WTC11 (cell line): ENCODE measurements at regions of chr2 and their contacts with region 1.

Region 1: GRCh38 chr2:44479122-44479887 is 117.6 kb downstream of the CAMKMT start:
- DNase-seq: no peak
- ATAC-seq: peak; percentile 95
- H3K4me3 Mint-ChIP-seq: no peak overlapping the region
- H3K27ac Mint-ChIP-seq: peak overlapping the region; percentile 38; the same call in 1 of the 2 replicates
- H3K4me1 Mint-ChIP-seq: peaks cover 35% of the 10 kb centered on the region
- H3K27me3 Mint-ChIP-seq: no peaks in the 10 kb centered on the region
- CTCF ChIP-seq: peak; percentile 81

Region 2: GRCh38 chr2:44462934-44463849 is 16.1 kb before region 1 on chr2:
- CTCF ChIA-PET with region 1: interaction called, 57 read pairs
- POLR2A ChIA-PET with region 1: interaction called, 3 read pairs
- DNase-seq: peak; percentile 34
- ATAC-seq: peak; percentile 98
- H3K4me3 Mint-ChIP-seq: peak overlapping the region; percentile 20
- H3K27ac Mint-ChIP-seq: peak overlapping the region; percentile 97
- H3K4me1 Mint-ChIP-seq: peaks cover 55% of the 10 kb centered on the region
- H3K27me3 Mint-ChIP-seq: no peaks in the 10 kb centered on the region
- CTCF ChIP-seq: no peak

Region 3: GRCh38 chr2:44515416-44515815 is 36.1 kb after region 1 on chr2:
- CTCF ChIA-PET with region 1: interaction called, 11 read pairs
- POLR2A ChIA-PET with region 1: no interaction called
- DNase-seq: no peak
- ATAC-seq: no peak
- H3K4me3 Mint-ChIP-seq: no peak overlapping the region
- H3K27ac Mint-ChIP-seq: no peak overlapping the region
- H3K4me1 Mint-ChIP-seq: peaks cover 25% of the 10 kb centered on the region
- H3K27me3 Mint-ChIP-seq: no peaks in the 10 kb centered on the region
- CTCF ChIP-seq: no peak

Region 4: GRCh38 chr2:44605511-44605910 is 126.2 kb after region 1 on chr2:
- CTCF ChIA-PET with region 1: no interaction called
- POLR2A ChIA-PET with region 1: no interaction called
- DNase-seq: no peak
- ATAC-seq: no peak
- H3K4me3 Mint-ChIP-seq: no peak overlapping the region
- H3K27ac Mint-ChIP-seq: no peak overlapping the region
- H3K4me1 Mint-ChIP-seq: no peaks in the 10 kb centered on the region
- H3K27me3 Mint-ChIP-seq: no peaks in the 10 kb centered on the region
- CTCF ChIP-seq: no peak

Region 5: DNA sequence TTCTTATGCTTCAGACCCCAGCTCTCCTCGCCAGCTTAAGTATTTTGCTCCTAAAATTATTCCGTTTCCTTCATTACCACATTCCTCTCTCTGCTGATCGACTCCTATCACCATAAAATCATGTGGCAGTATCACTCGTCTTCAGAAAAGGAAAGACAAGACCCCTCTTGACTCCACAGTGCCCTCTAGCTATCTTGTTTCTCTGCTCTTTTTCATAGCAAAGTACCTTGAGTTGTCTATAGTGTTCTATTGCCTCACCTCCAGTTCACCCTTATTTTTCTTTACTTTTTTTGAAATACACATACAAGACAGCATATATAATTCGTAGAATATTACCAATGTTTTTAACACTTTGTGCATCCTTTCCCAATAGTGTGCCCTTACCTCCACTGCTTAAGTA is 189.0 kb after region 1 on chr2:
- CTCF ChIA-PET with region 1: interaction called, 12 read pairs
- POLR2A ChIA-PET with region 1: no interaction called
- DNase-seq: no peak
- ATAC-seq: peak; percentile 92
- H3K4me3 Mint-ChIP-seq: no peak overlapping the region
- H3K27ac Mint-ChIP-seq: no peak overlapping the region
- H3K4me1 Mint-ChIP-seq: peaks cover 21% of the 10 kb centered on the region
- H3K27me3 Mint-ChIP-seq: no peaks in the 10 kb centered on the region; the same call in 1 of the 2 replicates
- CTCF ChIP-seq: no peak

Region 6: DNA sequence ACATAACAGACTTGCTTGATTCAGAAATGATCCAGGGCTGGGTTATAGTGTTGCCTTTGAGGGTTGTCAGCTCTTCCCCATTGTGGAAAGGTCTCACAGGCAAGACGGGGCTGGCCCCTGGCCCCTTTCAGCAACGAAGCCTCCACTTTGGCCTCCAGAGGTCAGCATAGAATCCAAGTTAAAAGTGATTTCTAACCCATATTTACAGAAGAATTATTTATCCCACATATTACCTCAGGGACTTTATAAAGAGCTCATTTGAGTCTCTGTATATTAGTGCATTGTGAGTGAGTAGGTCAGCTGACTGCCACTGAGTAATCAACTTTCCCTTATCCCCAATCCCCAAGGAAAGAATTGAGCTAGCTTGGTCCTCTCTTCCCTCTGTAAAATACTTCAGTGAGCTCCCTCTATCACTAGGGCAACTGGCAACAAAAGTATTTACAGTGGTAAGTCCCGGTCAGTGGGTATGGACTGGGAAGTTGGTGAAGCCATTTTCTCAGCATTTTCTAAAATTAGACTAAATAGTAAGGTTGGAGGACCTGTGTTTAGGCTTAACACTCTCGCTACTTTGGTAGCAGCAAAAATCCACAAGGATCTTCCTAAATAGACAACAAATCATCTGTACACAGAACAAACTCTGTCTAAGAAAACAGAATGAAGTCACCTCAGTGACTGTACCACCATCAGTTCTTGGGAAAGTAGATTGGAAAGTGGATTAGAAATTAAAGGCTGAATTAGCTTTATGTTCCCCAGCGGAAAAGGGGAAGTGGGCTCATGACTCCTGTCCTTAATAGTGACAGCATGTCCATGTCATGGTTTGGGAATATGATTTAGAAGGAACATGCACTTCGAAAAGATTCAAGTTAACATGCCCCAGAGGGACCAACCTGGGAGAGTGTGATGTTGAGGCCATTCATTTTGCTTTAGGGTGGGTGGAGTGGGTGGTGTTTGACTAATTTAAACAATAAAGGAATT is 291.2 kb after region 1 on chr2:
- CTCF ChIA-PET with region 1: interaction called, 16 read pairs
- POLR2A ChIA-PET with region 1: interaction called, 3 read pairs
- DNase-seq: peak; percentile 38
- ATAC-seq: peak; percentile 33; the same call in 1 of the 2 replicates
- H3K4me3 Mint-ChIP-seq: no peak overlapping the region
- H3K27ac Mint-ChIP-seq: no peak overlapping the region; the same call in 1 of the 2 replicates
- H3K4me1 Mint-ChIP-seq: peaks cover 71% of the 10 kb centered on the region
- H3K27me3 Mint-ChIP-seq: peaks cover 28% of the 10 kb centered on the region
- CTCF ChIP-seq: no peak